Colonic mucosa (tissue), 4 donors: ENCODE measurements at regions of chr15 and their contacts with region 1.

Region 1: DNA sequence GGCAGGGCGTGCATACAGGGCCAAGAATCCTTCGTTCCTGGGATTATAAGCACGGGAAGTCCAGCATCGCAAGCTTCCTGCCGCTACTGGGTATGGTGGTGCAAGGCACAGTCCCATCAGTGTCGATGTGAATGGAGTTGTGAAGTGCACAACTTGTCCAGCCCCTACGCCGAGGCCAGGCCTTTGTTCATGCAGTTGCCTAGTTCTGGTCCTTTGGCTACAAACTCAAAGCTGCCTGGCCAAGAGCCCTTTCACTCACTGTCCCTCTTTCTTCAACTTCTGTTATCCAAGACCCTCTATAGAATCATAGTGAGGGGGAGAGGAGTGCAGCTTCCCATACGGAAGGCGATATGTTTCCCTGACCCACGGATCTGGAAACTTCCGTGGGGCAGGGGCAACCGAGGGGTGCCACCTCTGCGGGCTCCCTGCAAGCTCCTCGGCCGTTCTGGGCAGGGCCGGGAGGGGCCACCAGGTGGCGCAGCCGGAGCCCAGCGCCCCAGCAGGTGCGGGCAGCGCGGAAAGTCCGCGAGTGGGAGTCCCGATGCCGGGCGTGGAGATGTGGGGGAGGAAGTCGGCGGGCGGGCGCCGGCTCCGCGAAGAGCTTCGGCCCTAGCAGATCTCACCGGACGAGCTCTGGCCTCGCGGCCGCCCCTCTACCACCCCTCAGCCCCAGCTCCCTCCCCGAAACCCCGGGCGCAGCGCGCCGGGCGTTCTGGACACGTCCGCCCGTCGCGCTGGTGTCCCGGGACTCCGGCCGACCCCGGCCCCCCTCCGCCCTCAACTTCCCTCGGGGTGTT is 693 bp downstream of the RASGRP1 start:
- DNase-seq: peak; percentile 79
- H3K4me3 ChIP-seq: peak overlapping the region; percentile 76
- H3K27ac ChIP-seq: peak overlapping the region; percentile 47
- H3K4me1 ChIP-seq: no peaks in the 10 kb centered on the region
- H3K27me3 ChIP-seq: peaks cover 10% of the 10 kb centered on the region
- CTCF ChIP-seq: peak; percentile 94

Region 2: GRCh38 chr15:38479266-38479665 is 84.7 kb before region 1 on chr15:
- intact Hi-C with region 1: loop called (anchors 5 kb)
- DNase-seq: no peak
- H3K4me3 ChIP-seq: no peak overlapping the region
- H3K27ac ChIP-seq: no peak overlapping the region
- H3K4me1 ChIP-seq: peaks cover 6% of the 10 kb centered on the region
- H3K27me3 ChIP-seq: no peaks in the 10 kb centered on the region
- CTCF ChIP-seq: no peak

Region 3: GRCh38 chr15:38624244-38625205 is 60.6 kb after region 1 on chr15:
- intact Hi-C with region 1: loop called (anchors 5 kb)
- DNase-seq: no peak
- H3K4me3 ChIP-seq: no peak overlapping the region
- H3K27ac ChIP-seq: no peak overlapping the region
- H3K4me1 ChIP-seq: no peaks in the 10 kb centered on the region
- H3K27me3 ChIP-seq: no peaks in the 10 kb centered on the region
- CTCF ChIP-seq: no peak

Region 4: DNA sequence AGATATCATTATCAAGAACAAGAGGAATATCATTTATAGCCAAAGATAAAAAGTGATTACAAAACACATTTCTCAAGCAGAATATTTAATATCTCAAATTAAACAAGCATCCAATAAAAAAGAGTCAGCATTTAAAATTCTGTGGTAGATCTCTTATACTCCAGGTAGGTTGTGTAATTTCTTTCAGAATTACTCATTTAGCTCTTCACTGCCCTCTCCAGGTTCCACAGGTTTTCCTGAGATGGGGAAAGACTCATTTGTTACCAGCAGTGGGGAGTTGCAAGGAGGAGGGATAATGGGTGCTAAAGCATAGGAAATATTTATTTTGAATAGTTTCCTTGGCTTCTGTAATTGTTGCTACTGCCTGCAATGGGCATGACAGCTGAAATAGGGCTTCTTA is 83.8 kb after region 1 on chr15:
- intact Hi-C with region 1: loop called (anchors 5 kb)
- DNase-seq: no peak
- H3K4me3 ChIP-seq: no peak overlapping the region
- H3K27ac ChIP-seq: no peak overlapping the region
- H3K4me1 ChIP-seq: no peaks in the 10 kb centered on the region
- H3K27me3 ChIP-seq: no peaks in the 10 kb centered on the region
- CTCF ChIP-seq: no peak

Region 5: DNA sequence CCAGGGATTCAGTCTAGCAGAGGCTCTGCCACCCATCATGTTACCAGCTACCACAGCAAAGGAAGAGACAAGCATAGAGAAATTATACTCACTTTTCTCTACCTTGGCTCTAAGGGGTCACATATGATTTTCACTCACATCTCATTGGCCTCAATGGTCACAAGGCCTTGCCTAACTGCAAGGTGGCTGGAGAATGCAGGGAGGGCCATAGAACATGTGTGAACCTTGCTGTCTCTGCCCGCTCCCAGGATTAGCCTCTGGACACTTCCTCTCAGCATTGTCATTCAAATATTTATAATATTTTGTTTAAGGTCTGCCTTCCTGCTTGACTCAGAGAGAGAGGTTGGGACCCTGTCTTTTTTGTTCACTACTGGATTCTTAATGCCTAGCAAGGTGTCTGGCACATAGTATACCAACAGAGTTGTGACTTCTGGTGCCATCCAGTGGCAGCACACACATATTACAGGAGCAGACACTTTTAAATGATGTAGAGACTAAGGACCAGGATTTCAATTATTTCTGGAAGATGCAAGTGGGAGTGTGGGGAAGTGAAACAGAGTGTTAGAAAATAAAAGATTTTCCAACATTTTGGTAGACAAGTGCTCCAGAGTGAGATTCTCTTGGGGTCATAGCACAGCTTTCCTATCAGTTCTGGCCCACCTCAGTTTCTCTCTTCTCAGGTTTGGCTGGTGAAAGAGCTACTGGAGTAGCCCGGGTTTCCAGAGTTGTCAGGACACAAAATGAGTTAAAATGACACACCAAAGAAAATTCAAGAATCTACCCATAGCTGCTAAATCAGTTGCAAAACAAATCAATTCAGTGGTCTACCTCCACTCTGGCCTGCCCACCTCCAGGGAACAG is 119.7 kb after region 1 on chr15:
- intact Hi-C with region 1: loop called (anchors 5 kb)
- DNase-seq: peak; percentile 65
- H3K4me3 ChIP-seq: no peak overlapping the region
- H3K27ac ChIP-seq: no peak overlapping the region
- H3K4me1 ChIP-seq: no peaks in the 10 kb centered on the region
- H3K27me3 ChIP-seq: no peaks in the 10 kb centered on the region
- CTCF ChIP-seq: peak; percentile 70